GM12878 (cell line): ENCODE measurements at regions of chr16 and their contacts with region 1.

Region 1: DNA sequence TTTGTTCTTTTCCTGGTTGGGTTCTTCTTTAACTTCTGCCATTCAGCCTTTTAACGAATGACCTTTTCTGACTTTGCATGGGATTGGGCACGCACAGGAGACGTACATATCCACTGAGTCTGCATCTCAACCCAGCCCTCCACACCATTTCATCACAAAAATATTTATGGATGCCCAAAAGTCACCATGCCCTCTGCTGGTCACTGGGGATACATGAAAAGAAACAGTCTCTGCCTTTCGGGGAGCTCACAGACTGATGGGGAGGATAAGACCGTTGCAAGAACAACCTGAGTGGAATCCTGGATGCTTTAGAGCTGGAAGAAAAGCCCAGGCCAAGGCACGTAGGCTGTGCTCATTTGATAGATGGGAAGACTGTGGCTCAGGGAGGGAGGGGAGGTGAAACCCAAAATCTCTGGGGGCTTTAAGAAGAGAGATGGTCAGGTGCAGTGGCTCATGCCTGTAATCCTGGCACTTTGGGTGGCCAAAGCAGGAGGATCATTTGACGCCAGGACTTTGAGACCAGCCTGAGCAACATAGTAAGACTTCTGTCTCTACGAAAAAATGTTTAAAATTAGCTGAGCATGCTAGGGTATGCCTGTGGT is 7.9 kb upstream of the MT2A start:
- DNase-seq: no peak
- ATAC-seq: peak; percentile 92
- H3K4me3 ChIP-seq: no peak overlapping the region
- H3K27ac ChIP-seq: no peak overlapping the region
- H3K4me1 ChIP-seq: no peaks in the 10 kb centered on the region
- H3K27me3 ChIP-seq: no peaks in the 10 kb centered on the region; a peak in 2 of 4 replicates
- CTCF ChIP-seq: peak; percentile 64 to 74 (median 64)
- EP300 ChIP-seq: no peak
- POLR2A ChIP-seq: no peak
- RAD21 ChIP-seq: peak; percentile 49

Region 2: GRCh38 chr16:56513972-56514371 is 86.5 kb before region 1 on chr16:
- CTCF ChIA-PET with region 1: interaction called, 13 read pairs
- POLR2A ChIA-PET with region 1: no interaction called
- RAD21 ChIA-PET with region 1: interaction called, 3 read pairs
- SMC1A ChIA-PET with region 1: interaction called, 4 read pairs
- in situ Hi-C with region 1: no loop called
- intact Hi-C with region 1: loop called (anchors 1 kb)
- DNase-seq: peak; percentile 4
- ATAC-seq: peak; percentile 95
- H3K4me3 ChIP-seq: no peak overlapping the region
- H3K27ac ChIP-seq: no peak overlapping the region
- H3K4me1 ChIP-seq: no peaks in the 10 kb centered on the region; the same call in 1 of the 2 replicates
- H3K27me3 ChIP-seq: no peaks in the 10 kb centered on the region
- CTCF ChIP-seq: peak; percentile 56 to 66 (median 64)
- EP300 ChIP-seq: no peak
- POLR2A ChIP-seq: no peak
- RAD21 ChIP-seq: peak; percentile 53

Region 3: DNA sequence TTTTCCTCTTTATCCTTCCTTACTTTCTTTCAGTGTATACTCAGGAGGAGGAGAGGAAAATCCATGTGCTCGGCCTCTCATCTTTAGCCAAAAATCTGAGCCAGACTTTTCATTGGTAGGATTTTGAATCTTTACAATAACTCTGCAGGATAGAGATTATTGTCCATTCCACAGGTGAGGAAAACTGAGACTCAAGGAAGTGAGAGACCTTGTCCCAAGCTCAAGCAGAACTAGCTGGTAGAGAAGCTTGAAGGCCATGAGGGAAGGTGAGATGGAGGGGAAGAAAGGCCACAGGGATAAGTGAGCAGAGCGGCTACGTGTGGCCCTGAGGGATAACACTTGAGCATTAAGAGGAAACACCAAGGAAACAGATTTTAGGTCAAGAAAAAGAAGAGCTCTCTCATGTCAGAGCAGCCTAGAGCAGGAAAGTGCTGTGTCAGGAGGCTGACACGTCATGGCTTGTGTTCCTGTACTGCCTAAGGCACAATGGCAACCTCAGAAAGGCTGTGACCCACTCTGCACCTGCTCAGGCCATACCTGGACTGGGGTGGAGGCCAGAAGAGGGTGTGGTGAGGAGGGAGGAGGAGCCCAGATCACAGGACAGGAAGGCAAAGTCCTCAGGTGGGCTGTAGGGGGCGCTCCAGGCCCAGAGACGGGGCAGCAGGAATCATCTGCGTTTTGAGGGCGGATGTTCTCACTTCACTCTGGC is 23.8 kb before region 1 on chr16:
- CTCF ChIA-PET with region 1: interaction called, 23 read pairs
- POLR2A ChIA-PET with region 1: no interaction called
- RAD21 ChIA-PET with region 1: interaction called, 5 read pairs
- SMC1A ChIA-PET with region 1: interaction called, 6 read pairs
- in situ Hi-C with region 1: no loop called
- intact Hi-C with region 1: no loop called
- DNase-seq: peak; percentile 32
- ATAC-seq: peak; percentile 100
- H3K4me3 ChIP-seq: no peak overlapping the region
- H3K27ac ChIP-seq: no peak overlapping the region
- H3K4me1 ChIP-seq: no peaks in the 10 kb centered on the region
- H3K27me3 ChIP-seq: no peaks in the 10 kb centered on the region
- CTCF ChIP-seq: peak; percentile 89 to 96 (median 95)
- EP300 ChIP-seq: no peak
- POLR2A ChIP-seq: no peak
- RAD21 ChIP-seq: peak; percentile 95

Region 4: GRCh38 chr16:56632156-56632847 is 31.8 kb after region 1 on chr16 and contains the start of gene MT1M:
- CTCF ChIA-PET with region 1: interaction called, 14 read pairs
- POLR2A ChIA-PET with region 1: no interaction called
- RAD21 ChIA-PET with region 1: interaction called, 3 read pairs
- SMC1A ChIA-PET with region 1: interaction called, 3 read pairs
- in situ Hi-C with region 1: no loop called
- intact Hi-C with region 1: no loop called
- DNase-seq: no peak
- ATAC-seq: peak; percentile 23
- H3K4me3 ChIP-seq: no peak within 1 kb of the TSS
- H3K27ac ChIP-seq: no peak within 1 kb of the TSS
- H3K4me1 ChIP-seq: peaks cover 15% of the 10 kb centered on the region
- H3K27me3 ChIP-seq: peaks cover 14 to 24% of the 10 kb centered on the region in 2 experiments
- CTCF ChIP-seq: no peak
- EP300 ChIP-seq: no peak
- POLR2A ChIP-seq: no peak
- RAD21 ChIP-seq: no peak
- polyA plus RNA-seq, gene MT1M: not detected

Region 5: DNA sequence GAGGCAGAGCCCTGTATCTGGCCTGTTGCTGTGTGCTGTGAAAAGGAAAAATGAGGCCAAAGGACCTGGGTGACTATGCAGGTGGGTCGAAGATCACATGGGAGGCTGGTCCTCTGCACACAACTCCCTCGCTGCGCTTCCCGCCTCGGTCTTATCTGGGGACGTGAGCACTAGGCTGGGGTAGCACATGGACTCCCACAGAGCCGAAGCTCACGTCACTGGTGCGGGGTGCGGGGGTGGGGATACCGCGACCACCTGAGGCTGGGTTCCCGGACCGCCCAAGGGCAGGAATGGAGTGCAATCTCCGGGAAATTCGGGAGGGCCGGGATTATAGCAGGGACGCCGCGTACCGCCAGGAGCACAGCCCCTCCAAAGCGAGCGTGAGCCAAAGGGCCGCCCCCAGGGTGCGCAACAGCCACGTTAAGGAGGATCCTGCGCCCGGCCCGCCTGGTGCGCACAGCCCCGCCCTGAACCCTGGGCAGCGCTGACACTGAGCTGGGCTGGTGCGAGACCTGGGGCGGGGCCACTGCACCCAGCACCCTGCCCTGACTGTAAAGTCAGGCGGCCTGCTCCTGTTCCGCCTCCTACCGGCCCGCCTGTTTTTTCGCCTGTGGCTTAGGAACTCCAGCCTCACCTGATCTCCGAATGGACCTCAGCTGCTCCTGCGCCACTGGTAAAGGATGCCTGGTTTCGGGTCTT is 42.7 kb after region 1 on chr16:
- CTCF ChIA-PET with region 1: interaction called, 10 read pairs
- POLR2A ChIA-PET with region 1: no interaction called
- RAD21 ChIA-PET with region 1: interaction called, 6 read pairs
- SMC1A ChIA-PET with region 1: interaction called, 3 read pairs
- in situ Hi-C with region 1: no loop called
- intact Hi-C with region 1: no loop called
- DNase-seq: no peak
- ATAC-seq: peak; percentile 99
- H3K4me3 ChIP-seq: no peak overlapping the region
- H3K27ac ChIP-seq: no peak overlapping the region
- H3K4me1 ChIP-seq: no peaks in the 10 kb centered on the region
- H3K27me3 ChIP-seq: peaks cover 10 to 25% of the 10 kb centered on the region in 2 experiments
- CTCF ChIP-seq: peak in 2 of 3 experiments; percentile 21 to 39; a peak in 3 of 6 replicates
- EP300 ChIP-seq: no peak
- POLR2A ChIP-seq: no peak
- RAD21 ChIP-seq: no peak